ENCODE measurements at regions of chr1 and their contacts with region 1.

Region 1: DNA sequence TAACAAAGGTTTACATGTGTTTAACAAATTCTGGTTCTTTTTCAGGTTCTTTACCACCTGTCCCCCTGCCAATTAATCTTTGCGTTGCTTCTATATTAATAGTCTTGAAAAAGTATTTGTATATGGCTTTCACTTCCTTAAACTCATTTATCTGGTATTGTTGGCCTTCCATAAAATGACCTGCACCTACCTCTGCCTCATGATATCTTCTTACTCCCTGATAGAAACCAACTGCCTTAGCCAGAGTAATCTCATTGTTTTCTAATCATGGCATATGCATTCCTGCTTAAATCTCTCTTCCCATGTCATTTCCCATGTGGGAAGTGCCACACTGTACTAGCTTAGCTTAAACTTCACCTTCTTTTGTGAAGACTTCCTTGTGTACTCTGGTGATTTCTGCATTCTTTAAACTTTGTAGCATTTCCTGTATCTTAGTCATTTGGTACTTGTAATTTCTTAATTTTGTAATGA is 8.7 kb downstream of the SMG7 start:
- DNase-seq: peak; percentile 82
- H3K4me3 ChIP-seq: peak overlapping the region; percentile 65
- H3K27ac ChIP-seq: peak overlapping the region; percentile 100
- H3K4me1 ChIP-seq: peaks cover 98% of the 10 kb centered on the region
- CTCF ChIP-seq: no peak

Region 2: GRCh38 chr1:183493548-183494246 is 12.7 kb after region 1 on chr1:
- CTCF ChIA-PET with region 1: interaction called, 3 read pairs
- POLR2A ChIA-PET with region 1: interaction called, 23 read pairs
- intact Hi-C with region 1: loop called (anchors 2 kb)
- DNase-seq: no peak
- H3K4me3 ChIP-seq: no peak overlapping the region
- H3K27ac ChIP-seq: no peak overlapping the region
- H3K4me1 ChIP-seq: peaks cover 98% of the 10 kb centered on the region
- CTCF ChIP-seq: no peak

Region 3: GRCh38 chr1:183506561-183506960 is 25.6 kb after region 1 on chr1:
- CTCF ChIA-PET with region 1: no interaction called
- POLR2A ChIA-PET with region 1: interaction called, 11 read pairs
- intact Hi-C with region 1: no loop called
- DNase-seq: no peak
- H3K4me3 ChIP-seq: no peak overlapping the region
- H3K27ac ChIP-seq: no peak overlapping the region
- H3K4me1 ChIP-seq: peaks cover 45% of the 10 kb centered on the region
- CTCF ChIP-seq: no peak

Region 4: GRCh38 chr1:183590244-183591191 is 109.5 kb after region 1 on chr1 and contains the start of gene NCF2:
- CTCF ChIA-PET with region 1: no interaction called
- POLR2A ChIA-PET with region 1: interaction called, 12 read pairs
- intact Hi-C with region 1: no loop called
- DNase-seq: peak; percentile 89
- H3K4me3 ChIP-seq: peak within 1 kb of the TSS; percentile 62
- H3K27ac ChIP-seq: peak within 1 kb of the TSS; percentile 95
- H3K4me1 ChIP-seq: peaks cover 69% of the 10 kb centered on the region
- CTCF ChIP-seq: peak; percentile 31; the same call in 1 of the 2 replicates
- total RNA-seq, gene NCF2: 4.0 and 5.0 TPM in 2 replicates

Region 5: GRCh38 chr1:184504040-184504954 is 1023.3 kb after region 1 on chr1:
- CTCF ChIA-PET with region 1: no interaction called
- POLR2A ChIA-PET with region 1: no interaction called
- intact Hi-C with region 1: no loop called
- DNase-seq: no peak
- H3K4me3 ChIP-seq: no peak overlapping the region
- H3K27ac ChIP-seq: no peak overlapping the region
- H3K4me1 ChIP-seq: no peaks in the 10 kb centered on the region
- CTCF ChIP-seq: no peak

Measured in OCI-LY7 (cell line).